Heart right ventricle (tissue), 16 donors: ENCODE measurements at regions of chr13 and their contacts with region 1.

Region 1: GRCh38 chr13:107192289-107192688 is 624.4 kb upstream of the ARGLU1 start:
- DNase-seq: no peak
- ATAC-seq: no peak
- H3K4me3 ChIP-seq: no peak overlapping the region
- H3K27ac ChIP-seq: no peak overlapping the region
- H3K4me1 ChIP-seq: no peaks in the 10 kb centered on the region
- H3K27me3 ChIP-seq: no peaks in the 10 kb centered on the region
- CTCF ChIP-seq: no peak

Region 2: DNA sequence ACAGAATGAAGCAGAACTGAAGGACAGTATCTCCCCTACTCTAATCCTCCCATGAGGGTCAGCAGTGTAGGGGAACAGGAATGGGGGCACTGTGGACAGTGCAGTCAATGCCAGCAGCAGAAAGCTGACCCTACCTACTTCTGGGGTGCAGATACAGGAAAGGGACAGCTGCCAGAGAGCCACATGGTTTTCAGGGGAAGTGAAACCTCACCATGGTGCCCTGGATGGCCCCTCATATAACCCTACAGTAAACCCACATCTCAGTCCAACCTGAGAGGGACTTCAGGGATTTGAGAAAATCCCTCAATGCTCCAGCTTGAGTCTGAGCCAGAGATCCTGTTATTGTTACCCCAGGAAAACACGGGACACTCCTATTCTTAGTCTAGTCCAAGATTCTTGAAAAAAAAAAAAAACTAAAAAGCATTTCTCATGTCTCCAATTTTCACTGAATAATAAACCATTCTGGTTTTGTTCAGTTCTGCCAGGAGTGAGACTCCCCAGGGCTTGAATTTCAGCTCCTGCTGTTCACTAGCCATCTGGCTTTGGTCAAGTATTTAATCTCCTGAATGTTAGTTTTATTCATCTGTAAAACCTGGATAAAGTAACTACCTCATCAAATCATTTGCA is 112.8 kb before region 1 on chr13:
- intact Hi-C with region 1: no loop called
- DNase-seq: no peak
- ATAC-seq: peak in 3 of 8 donors; percentile 24 to 62 (median 29)
- H3K4me3 ChIP-seq: no peak overlapping the region
- H3K27ac ChIP-seq: no peak overlapping the region
- H3K4me1 ChIP-seq: peaks cover 0 to 12% (median 0%) of the 10 kb centered on the region in 9 donors
- H3K27me3 ChIP-seq: no peaks in the 10 kb centered on the region
- CTCF ChIP-seq: no peak

Region 3: GRCh38 chr13:107144432-107144831 is 47.9 kb before region 1 on chr13:
- intact Hi-C with region 1: loop called in 1 of 10 experiments (anchors 10 kb)
- DNase-seq: no peak
- ATAC-seq: no peak
- H3K4me3 ChIP-seq: no peak overlapping the region
- H3K27ac ChIP-seq: no peak overlapping the region
- H3K4me1 ChIP-seq: peaks cover 0 to 21% (median 3%) of the 10 kb centered on the region in 9 donors
- H3K27me3 ChIP-seq: no peaks in the 10 kb centered on the region
- CTCF ChIP-seq: peak in 6 of 9 donors; percentile 21 to 50 (median 26)

Region 4: GRCh38 chr13:107284173-107284572 is 91.9 kb after region 1 on chr13:
- intact Hi-C with region 1: no loop called
- DNase-seq: no peak
- ATAC-seq: no peak
- H3K4me3 ChIP-seq: no peak overlapping the region
- H3K27ac ChIP-seq: no peak overlapping the region
- H3K4me1 ChIP-seq: no peaks in the 10 kb centered on the region
- H3K27me3 ChIP-seq: no peaks in the 10 kb centered on the region
- CTCF ChIP-seq: no peak